K562 (cell line): ENCODE measurements at regions of chr11 and their contacts with region 1.

Region 1: DNA sequence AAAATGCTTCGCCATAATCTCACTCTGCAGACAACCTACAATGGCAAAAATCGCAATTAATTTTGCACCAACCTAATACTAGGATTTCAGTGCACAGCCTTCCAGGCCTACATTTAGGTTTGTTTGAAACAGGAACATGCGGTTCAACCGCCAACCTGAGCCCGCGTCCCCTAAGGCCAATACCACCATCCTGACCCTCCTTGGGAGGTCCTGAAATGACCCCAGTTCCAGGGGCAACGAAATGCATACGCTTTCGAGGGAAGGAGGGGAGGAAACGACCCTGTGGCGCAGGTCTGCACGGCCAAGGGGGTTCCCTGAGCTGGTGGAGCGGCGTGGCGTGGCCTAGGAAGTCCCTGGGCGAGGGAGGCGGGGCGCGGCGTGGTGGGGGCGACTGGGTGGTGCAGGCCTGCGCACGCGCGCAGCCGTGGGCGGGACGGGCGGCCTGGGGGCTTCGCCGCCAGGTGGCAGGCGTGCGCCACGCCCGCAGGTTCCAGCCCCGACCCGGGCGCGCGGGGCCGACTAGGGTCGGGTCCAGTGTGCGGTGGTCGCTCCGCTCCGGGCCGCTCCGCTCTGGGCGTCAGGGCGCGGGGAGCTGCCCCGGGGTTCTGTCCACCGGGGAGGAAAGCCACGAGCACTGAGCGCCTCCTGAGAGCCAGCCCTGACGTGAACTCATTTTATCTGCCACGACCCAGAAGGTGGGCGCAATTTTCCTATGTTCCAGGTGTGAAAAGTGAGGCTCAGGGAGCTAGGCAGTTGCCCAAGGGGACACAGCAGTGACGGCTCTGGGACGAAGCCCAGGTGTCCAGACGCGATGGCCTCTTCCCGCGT is 94.1 kb downstream of the SWAP70 start:
- DNase-seq: peak; percentile 90 to 99 (median 99)
- ATAC-seq: peak; percentile 92
- H3K4me3 ChIP-seq: peak overlapping the region; percentile 54
- H3K27ac ChIP-seq: peak overlapping the region; percentile 77
- H3K4me1 ChIP-seq: peaks cover 22 to 23% of the 10 kb centered on the region in 2 experiments
- H3K27me3 ChIP-seq: no peaks in the 10 kb centered on the region; a peak in 1 of 5 replicates
- CTCF ChIP-seq: peak; percentile 61 to 88 (median 76); a peak in 5 of 6 replicates
- EP300 ChIP-seq: no peak
- POLR2A ChIP-seq: peak; percentile 57
- RAD21 ChIP-seq: peak; percentile 92 to 95

Region 2: DNA sequence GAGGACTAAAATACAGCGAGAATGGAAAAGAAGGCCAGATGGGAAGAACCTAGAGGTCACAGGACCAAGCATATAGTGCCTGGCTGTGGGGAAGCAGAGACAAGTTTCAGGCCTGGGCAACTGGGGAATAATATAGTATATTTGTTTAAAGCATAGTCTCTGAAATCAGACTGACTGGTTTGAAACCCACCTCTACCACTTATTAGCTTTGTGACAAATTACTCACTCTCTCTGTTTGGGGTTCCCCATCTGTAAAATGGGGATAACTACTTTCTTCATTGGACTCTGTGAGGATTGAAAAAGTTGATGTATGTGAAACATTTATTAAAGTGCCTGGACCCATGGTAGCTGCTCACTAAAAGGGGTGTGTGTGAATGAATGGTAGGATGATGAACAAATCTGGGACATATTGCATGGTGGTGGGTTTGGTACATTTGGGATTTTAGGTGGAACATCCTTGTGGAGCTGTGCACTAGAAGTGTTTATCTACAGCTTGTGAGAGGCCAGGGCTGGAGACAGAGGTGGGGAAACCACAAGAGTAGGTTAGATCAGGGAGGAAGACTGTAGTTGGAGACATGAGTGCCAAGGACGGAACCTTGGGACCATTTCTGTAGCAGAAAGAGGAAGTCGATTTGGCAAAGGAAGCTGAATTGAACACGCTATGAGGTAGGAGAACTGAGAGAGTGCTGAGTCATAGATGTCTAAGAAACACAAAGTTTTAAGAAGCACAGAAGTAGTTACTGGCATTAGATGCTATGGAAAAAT is 41.6 kb before region 1 on chr11:
- CTCF ChIA-PET with region 1: no interaction called
- POLR2A ChIA-PET with region 1: no interaction called
- in situ Hi-C with region 1: no loop called
- intact Hi-C with region 1: no loop called
- DNase-seq: peak in 3 of 4 experiments; percentile 12 to 66 (median 21)
- ATAC-seq: peak; percentile 89
- H3K4me3 ChIP-seq: no peak overlapping the region
- H3K27ac ChIP-seq: peak overlapping the region; percentile 55; the same call in 2 of the 3 replicates
- H3K4me1 ChIP-seq: peaks cover 0 to 12% of the 10 kb centered on the region in 2 experiments; a peak in 4 of 5 replicates
- H3K27me3 ChIP-seq: no peaks in the 10 kb centered on the region
- CTCF ChIP-seq: no peak
- EP300 ChIP-seq: no peak
- POLR2A ChIP-seq: no peak
- RAD21 ChIP-seq: no peak

Region 3: GRCh38 chr11:9861860-9862725 is 104.1 kb after region 1 on chr11:
- CTCF ChIA-PET with region 1: interaction called, 3 read pairs
- POLR2A ChIA-PET with region 1: no interaction called
- in situ Hi-C with region 1: no loop called
- intact Hi-C with region 1: loop called (anchors 1 kb)
- DNase-seq: peak; percentile 59 to 79 (median 70)
- ATAC-seq: peak; percentile 100
- H3K4me3 ChIP-seq: no peak overlapping the region
- H3K27ac ChIP-seq: no peak overlapping the region
- H3K4me1 ChIP-seq: no peaks in the 10 kb centered on the region; a peak in 1 of 5 replicates
- H3K27me3 ChIP-seq: no peaks in the 10 kb centered on the region
- CTCF ChIP-seq: peak; percentile 84 to 91 (median 85)
- EP300 ChIP-seq: no peak
- POLR2A ChIP-seq: no peak
- RAD21 ChIP-seq: peak; percentile 81 to 92

Region 4: DNA sequence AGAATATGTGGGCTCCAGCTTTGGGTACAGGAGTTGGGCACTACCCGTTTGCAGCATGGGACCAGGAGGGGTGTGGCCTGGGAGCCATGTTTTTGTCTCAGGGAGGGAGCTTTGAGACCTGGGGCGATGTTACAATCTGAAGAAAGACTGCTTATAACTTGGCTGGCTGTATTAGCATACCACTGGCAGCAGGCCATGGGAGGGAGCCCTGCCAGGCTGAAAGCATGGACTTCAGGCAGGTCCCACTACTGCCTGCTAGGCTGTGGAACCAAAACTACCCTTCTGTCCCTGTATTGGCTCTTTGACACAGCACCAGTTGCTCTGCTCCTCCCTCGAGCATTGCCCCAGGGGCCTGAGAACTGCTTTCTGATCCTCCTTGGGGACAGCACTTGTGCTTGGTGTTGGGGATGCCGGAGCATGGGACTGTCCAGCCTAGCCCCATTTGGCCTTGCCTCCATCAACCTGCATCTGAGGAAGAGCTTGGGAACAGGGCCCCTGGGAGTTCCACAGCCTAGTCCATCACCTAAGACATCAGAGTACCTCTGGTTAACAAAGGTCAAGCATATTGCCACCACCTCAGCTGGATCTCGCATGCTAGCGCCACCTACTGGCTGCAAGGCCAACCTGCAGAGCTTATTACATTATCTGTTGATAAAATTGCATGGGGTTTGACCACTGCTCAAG is 318.6 kb after region 1 on chr11:
- CTCF ChIA-PET with region 1: no interaction called
- POLR2A ChIA-PET with region 1: interaction called, 3 read pairs
- in situ Hi-C with region 1: no loop called
- intact Hi-C with region 1: loop called (anchors 2 kb)
- DNase-seq: peak; percentile 62 to 69 (median 63)
- ATAC-seq: peak; percentile 94
- H3K4me3 ChIP-seq: no peak overlapping the region
- H3K27ac ChIP-seq: no peak overlapping the region
- H3K4me1 ChIP-seq: no peaks in the 10 kb centered on the region
- H3K27me3 ChIP-seq: no peaks in the 10 kb centered on the region
- CTCF ChIP-seq: peak; percentile 80 to 86 (median 86)
- EP300 ChIP-seq: no peak
- POLR2A ChIP-seq: no peak
- RAD21 ChIP-seq: peak; percentile 17 to 74; a peak in 2 of 4 replicates

Region 5: DNA sequence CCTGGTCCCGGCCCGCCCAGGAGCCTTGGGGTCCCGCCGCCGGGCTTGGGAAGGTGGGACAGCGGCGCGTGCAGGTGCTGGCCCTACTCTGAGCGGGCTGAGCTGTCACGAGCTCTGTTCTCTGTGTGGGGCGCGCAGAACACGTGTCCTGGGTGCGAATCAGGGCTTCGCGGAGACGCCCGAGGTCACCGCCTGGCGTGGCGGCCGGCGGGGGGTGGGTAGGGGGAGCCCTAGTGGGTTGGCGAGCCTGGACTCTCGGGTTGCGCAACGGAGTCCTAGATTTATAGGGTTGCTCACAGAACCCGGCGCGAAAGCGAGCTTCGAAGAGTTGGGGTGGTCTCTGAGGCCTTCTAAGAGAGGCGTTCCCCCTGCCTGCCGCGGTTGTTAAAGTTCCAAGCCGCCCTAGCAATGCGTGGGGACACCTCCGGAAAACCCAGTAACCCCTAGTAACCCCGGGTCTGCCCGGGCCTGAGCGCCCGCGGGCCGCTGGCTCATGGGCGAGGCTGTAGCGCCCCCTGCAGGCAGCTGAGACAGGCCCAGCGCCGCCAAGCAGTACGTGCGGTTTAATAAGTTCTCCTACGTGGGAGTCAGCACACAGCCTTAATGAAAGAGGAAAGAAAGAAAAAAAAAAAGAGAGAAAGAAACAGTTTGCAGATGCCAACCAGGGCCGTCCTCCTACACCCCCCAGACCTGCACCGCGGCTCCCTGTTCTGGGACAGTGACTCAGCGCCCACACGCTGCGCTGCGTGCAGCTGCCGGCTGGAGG is 549.6 kb after region 1 on chr11:
- CTCF ChIA-PET with region 1: interaction called, 4 read pairs
- POLR2A ChIA-PET with region 1: interaction called, 3 read pairs
- in situ Hi-C with region 1: loop called (anchors 10 kb)
- intact Hi-C with region 1: loop called (anchors 5 kb)
- DNase-seq: peak; percentile 81 to 87 (median 84)
- ATAC-seq: peak; percentile 94
- H3K4me3 ChIP-seq: peak overlapping the region; percentile 32
- H3K27ac ChIP-seq: no peak overlapping the region; the same call in 2 of the 3 replicates
- H3K4me1 ChIP-seq: peaks cover 24 to 50% of the 10 kb centered on the region in 2 experiments
- H3K27me3 ChIP-seq: peaks cover 15 to 19% of the 10 kb centered on the region in 2 experiments
- CTCF ChIP-seq: peak; percentile 87 to 97 (median 88)
- EP300 ChIP-seq: no peak
- POLR2A ChIP-seq: no peak
- RAD21 ChIP-seq: peak; percentile 85 to 89

Region 6: GRCh38 chr11:10322830-10323792 is 565.1 kb after region 1 on chr11:
- CTCF ChIA-PET with region 1: interaction called, 25 read pairs
- POLR2A ChIA-PET with region 1: no interaction called
- in situ Hi-C with region 1: loop called (anchors 10 kb)
- intact Hi-C with region 1: loop called (anchors 2 kb)
- DNase-seq: peak; percentile 36 to 77 (median 51)
- ATAC-seq: peak; percentile 91
- H3K4me3 ChIP-seq: no peak overlapping the region
- H3K27ac ChIP-seq: no peak overlapping the region
- H3K4me1 ChIP-seq: peaks cover 0 to 5% of the 10 kb centered on the region in 2 experiments; a peak in 2 of 5 replicates
- H3K27me3 ChIP-seq: no peaks in the 10 kb centered on the region
- CTCF ChIP-seq: peak; percentile 46 to 82 (median 57); a peak in 4 of 6 replicates
- EP300 ChIP-seq: no peak; the same call in 1 of the 2 replicates
- POLR2A ChIP-seq: no peak
- RAD21 ChIP-seq: peak; percentile 71 to 72